Activated T-helper 1 cell treated with anti-CD3 and anti-CD28 coated beads, Interleukin-12 subunit alpha, Interleukin-12 subunit beta, Interleukin-2, Interleukin-4 antibody, amounts not matched to agents 30 ng/mL and 10 ng/mL and 1 ng/mL, durations not matched to agents 14 hours and 24 hours and 36 hours (primary cell): ENCODE measurements at regions of chr14 and their contacts with region 1.

Region 1: DNA sequence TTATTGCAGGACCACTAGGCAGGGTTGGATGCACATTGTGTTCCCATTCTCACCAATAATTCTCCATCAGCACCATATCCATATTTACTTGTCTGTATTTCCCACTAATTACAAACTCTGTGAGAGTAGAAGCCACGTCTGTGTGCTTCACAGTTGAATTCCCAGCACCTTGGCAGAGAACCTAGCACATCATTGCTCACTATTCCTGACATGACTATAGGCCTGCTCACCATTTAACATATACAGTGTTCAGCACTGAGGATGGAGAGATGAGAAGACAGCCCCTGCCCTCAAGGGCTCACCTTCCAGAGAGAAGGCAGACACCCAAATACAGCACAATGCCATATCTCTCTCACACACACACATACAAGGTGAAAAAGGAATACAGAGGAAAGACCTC is 5.0 kb downstream of the DAD1 start:
- DNase-seq: no peak
- H3K4me3 Mint-ChIP-seq: peak overlapping the region; percentile 46
- H3K27ac Mint-ChIP-seq: peak overlapping the region; percentile 70
- H3K4me1 Mint-ChIP-seq: peaks cover 69% of the 10 kb centered on the region
- H3K27me3 Mint-ChIP-seq: no peaks in the 10 kb centered on the region

Region 2: DNA sequence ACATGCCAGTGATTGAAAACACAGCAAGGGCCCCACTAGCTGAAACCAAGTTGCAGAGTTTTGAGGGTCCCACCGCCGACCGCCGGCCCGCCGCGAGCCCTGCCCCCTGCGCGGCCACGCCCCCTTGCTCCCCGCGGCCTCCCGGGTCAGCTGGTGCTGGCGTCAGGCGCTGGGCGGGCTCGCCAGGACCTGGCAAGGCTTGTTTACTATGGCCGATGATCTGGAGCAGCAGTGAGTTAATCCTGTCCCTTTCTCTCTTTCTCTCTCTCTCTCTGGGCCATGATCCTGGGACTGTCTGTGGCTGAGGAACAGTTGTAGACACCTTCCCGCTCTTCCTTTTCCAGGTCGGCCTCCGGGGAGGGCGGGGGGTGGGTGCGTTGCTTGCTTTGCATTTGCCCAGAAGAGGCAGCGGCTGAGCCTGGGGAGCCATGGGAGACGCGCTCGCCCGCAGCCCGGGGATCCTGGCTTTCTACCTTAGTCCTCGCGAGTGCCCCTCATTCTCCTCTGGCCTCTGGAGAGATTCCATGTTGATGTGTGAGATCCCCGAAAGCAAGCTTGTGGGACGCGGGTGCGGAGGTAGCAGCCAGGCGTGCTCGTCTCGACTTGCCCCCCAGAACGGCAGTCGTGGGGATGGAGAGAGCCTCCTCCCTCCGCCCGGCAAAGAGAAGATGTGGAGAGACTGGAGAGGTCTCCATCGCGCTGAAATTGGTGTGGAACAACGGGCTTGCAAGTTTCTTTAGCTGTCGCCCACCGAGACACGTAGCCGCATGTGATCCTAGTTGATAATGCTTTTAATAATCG is 14.3 kb after region 1 on chr14 and contains the start of gene ABHD4:
- intact Hi-C with region 1: loop called (anchors 1 kb)
- DNase-seq: peak; percentile 72
- H3K4me3 Mint-ChIP-seq: peak within 1 kb of the TSS; percentile 97
- H3K27ac Mint-ChIP-seq: peak within 1 kb of the TSS; percentile 84
- H3K4me1 Mint-ChIP-seq: peaks cover 39% of the 10 kb centered on the region
- H3K27me3 Mint-ChIP-seq: no peaks in the 10 kb centered on the region
- total RNA-seq, gene ABHD4: 13.2 and 13.6 TPM in 2 replicates

Region 3: GRCh38 chr14:22836301-22837113 is 252.5 kb after region 1 on chr14 and contains the start of gene MMP14:
- intact Hi-C with region 1: no loop called
- DNase-seq: no peak
- H3K4me3 Mint-ChIP-seq: peak within 1 kb of the TSS; percentile 72
- H3K27ac Mint-ChIP-seq: no peak within 1 kb of the TSS
- H3K4me1 Mint-ChIP-seq: peaks cover 11% of the 10 kb centered on the region
- H3K27me3 Mint-ChIP-seq: peaks cover 13% of the 10 kb centered on the region
- total RNA-seq, gene MMP14: 1.5 and 2.6 TPM in 2 replicates